ENCODE measurements at regions of chr19 and their contacts with region 1.

Region 1: GRCh38 chr19:41310033-41310758 is at the start of gene CCDC97:
- DNase-seq: peak; percentile 77 to 89 (median 83)
- H3K4me3 ChIP-seq: peak within 1 kb of the TSS; percentile 52 to 94 (median 79)
- H3K27ac ChIP-seq: peak within 1 kb of the TSS; percentile 89 to 100 (median 97)
- H3K27me3 ChIP-seq: no peaks in the 10 kb centered on the region
- CTCF ChIP-seq: peak in 41 of 56 donors; percentile 6 to 66 (median 36)
- total RNA-seq, gene CCDC97: 18.1 to 45.4 (median 26.0) TPM

Region 2: GRCh38 chr19:41206926-41207750 is 103.1 kb before region 1 on chr19:
- intact Hi-C with region 1: loop called in 1 of 2 experiments (anchors 5 kb)
- DNase-seq: no peak
- H3K4me3 ChIP-seq: no peak overlapping the region
- H3K27ac ChIP-seq: peak overlapping the region in 5 of 59 donors; percentile 5 to 48 (median 15)
- H3K27me3 ChIP-seq: no peaks in the 10 kb centered on the region
- CTCF ChIP-seq: no peak

Region 3: DNA sequence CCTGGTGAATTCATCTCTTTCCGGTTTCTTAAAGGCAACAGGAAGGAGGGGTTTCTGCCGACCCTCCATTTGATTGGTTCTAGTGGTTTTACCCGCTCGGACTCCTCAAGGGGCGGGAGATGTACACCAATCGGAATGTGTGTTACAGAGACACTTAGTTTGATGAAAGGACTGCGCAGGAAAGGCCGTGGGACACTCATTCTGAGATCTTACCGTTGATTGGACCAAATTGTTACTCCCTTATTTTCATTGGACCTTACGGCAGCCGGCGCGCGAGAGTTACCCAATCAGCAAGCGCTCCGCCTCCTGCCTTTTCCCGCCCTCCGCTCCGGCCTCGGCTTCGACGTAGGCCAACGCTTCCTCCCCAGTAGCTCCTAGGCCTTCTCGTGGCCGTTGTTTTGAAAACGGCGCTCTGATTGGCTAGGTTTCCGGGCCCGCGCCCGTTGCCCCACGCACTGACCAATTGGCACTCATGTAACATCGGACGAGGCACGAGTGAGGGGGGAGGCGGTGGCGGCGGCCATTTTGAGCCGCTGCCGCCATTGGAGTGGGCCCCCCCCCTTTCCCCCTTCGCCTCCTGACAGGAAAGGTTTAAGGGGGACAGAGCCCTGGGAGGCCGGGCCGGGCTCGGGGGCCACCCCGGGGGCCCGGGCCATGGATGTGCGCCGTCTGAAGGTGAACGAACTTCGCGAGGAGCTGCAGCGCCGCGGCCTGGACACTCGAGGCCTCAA is 46.2 kb before region 1 on chr19 and contains the start of gene HNRNPUL1:
- intact Hi-C with region 1: loop called (anchors 2 kb)
- DNase-seq: peak; percentile 96 to 99 (median 98)
- H3K4me3 ChIP-seq: peak within 1 kb of the TSS; percentile 67 to 100 (median 97)
- H3K27ac ChIP-seq: peak within 1 kb of the TSS; percentile 87 to 100 (median 98)
- H3K27me3 ChIP-seq: no peaks in the 10 kb centered on the region
- CTCF ChIP-seq: peak in 40 of 56 donors; percentile 13 to 54 (median 32)
- total RNA-seq, gene HNRNPUL1: 92.7 to 156 (median 118) TPM

Region 4: GRCh38 chr19:41276231-41276630 is 34.0 kb before region 1 on chr19:
- intact Hi-C with region 1: no loop called
- DNase-seq: no peak
- H3K4me3 ChIP-seq: no peak overlapping the region
- H3K27ac ChIP-seq: no peak overlapping the region
- H3K27me3 ChIP-seq: no peaks in the 10 kb centered on the region
- CTCF ChIP-seq: no peak

Region 5: DNA sequence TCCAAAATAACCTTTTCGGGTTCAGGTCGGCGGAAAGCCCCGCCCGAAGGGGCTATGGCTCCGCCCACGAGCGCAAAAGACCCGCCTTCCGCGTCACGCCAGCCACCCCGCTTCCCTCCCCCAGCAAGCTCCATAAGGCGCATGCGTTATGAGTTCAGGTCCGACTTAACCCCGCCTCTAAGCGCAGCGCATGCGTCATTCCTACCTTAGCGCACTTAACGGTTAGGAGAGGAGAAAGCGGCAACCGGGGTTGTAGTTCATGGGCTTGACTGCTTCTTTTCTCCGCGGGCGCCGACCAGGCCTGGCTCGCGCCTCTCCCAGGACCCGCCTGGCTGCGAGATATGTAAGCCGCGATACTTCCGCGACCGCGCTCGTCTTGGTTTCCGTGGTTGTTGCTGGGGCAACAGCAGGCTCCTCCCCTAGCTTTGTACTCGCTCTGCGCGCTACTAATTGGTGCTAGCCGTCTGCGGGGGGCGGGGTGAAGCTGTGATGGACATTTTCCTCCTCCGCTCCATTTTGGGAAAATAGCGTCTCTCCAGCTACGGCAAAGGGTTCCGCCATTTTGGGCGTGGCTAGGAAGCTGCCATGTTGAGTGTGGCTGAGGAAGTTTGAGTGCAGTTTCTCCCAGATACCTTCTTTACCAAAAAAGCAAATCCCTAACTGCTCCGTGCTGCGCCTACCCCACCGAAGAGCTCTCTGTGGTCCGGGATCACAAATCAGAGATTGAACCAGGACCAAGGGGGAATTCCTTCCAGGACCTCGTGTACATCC is 53.7 kb after region 1 on chr19 and contains the start of gene B9D2:
- intact Hi-C with region 1: loop called in 1 of 2 experiments (anchors 2 kb)
- DNase-seq: peak; percentile 95 to 98 (median 98)
- H3K4me3 ChIP-seq: peak within 1 kb of the TSS; percentile 52 to 98 (median 82)
- H3K27ac ChIP-seq: peak within 1 kb of the TSS; percentile 80 to 100 (median 98)
- H3K27me3 ChIP-seq: no peaks in the 10 kb centered on the region
- CTCF ChIP-seq: peak in 13 of 56 donors; percentile 6 to 42 (median 27)
- total RNA-seq, gene B9D2: 3.0 to 12.9 (median 6.6) TPM

Region 6: GRCh38 chr19:41439441-41440222 is 129.4 kb after region 1 on chr19 and contains the start of gene DMAC2:
- intact Hi-C with region 1: loop called in 1 of 2 experiments (anchors 5 kb)
- DNase-seq: peak; percentile 89 to 98 (median 97)
- H3K4me3 ChIP-seq: peak within 1 kb of the TSS; percentile 37 to 96 (median 84)
- H3K27ac ChIP-seq: peak within 1 kb of the TSS; percentile 68 to 99 (median 94)
- H3K27me3 ChIP-seq: peaks cover 0 to 8% (median 0%) of the 10 kb centered on the region in 45 donors
- CTCF ChIP-seq: peak in 54 of 56 donors; percentile 13 to 69 (median 50)
- total RNA-seq, gene DMAC2: 29.5 to 57.2 (median 42.7) TPM